Activated CD4-positive, alpha-beta memory T cell treated with anti-CD3 and anti-CD28 coated beads for 36 hours (primary cell): ENCODE measurements at regions of chr13 and their contacts with region 1.

Region 1: DNA sequence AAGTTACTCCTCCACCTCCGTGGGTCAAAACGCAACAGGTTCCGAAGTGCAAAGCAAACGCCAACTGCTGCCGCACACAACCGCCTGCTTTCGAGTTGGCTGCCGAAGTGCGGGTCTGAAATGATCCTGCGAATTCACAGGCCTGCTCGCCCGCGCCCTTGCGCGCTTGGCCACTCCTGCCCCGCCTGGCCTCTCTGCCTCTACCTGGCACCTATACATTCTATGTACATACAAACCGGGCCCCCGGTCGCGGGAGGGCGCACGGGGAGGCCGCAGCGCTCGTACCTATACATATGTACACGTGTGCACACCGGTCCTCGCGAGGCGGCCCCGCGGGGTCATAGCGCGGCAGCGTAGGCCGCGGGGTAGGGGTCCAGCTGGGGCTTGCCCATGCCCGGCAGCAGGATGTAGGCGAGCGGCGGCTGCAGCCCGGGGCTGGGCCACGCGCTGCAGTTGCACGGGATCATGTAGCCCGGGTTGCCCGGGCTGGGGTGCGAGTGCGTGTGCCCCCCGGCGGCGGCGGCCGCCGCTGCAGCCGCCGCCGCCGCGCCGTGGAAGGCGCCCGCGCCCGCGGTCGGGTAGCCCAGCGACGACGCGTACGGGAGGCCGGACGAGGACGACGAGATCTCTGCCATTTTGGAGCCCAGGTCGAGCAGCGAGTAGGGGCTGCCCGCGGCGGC is 1.3 kb downstream of the SOX21 start:
- DNase-seq: peak; percentile 34
- H3K4me3 Mint-ChIP-seq: peak overlapping the region; percentile 36
- H3K27ac Mint-ChIP-seq: no peak overlapping the region
- H3K4me1 Mint-ChIP-seq: peaks cover 21% of the 10 kb centered on the region
- H3K27me3 Mint-ChIP-seq: peaks cover 72% of the 10 kb centered on the region

Region 2: GRCh38 chr13:94674609-94675348 is 36.2 kb before region 1 on chr13:
- CTCF ChIA-PET with region 1: interaction called, 3 read pairs
- POLR2A ChIA-PET with region 1: no interaction called
- intact Hi-C with region 1: loop called (anchors 5 kb)
- DNase-seq: peak; percentile 60
- H3K4me3 Mint-ChIP-seq: no peak overlapping the region
- H3K27ac Mint-ChIP-seq: no peak overlapping the region
- H3K4me1 Mint-ChIP-seq: no peaks in the 10 kb centered on the region
- H3K27me3 Mint-ChIP-seq: peaks cover 29% of the 10 kb centered on the region

Region 3: DNA sequence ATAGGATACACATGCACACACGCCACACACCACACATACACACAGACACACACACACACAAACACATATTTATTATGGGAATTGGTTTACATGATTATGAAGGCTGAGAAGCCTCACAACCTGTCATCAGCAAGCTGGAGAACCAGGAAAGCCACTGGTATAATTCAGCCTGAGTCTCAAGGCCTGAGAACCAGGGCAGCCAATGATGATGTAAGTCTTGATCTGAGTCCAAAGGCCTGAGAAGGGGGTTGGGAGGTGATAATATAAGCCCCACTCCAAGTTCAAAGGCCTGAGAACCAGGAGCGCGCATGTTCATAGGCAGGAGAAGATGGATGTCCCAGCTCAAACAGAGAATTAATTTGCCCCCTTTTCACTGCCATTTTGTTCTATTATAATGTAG is 20.0 kb after region 1 on chr13:
- CTCF ChIA-PET with region 1: no interaction called
- POLR2A ChIA-PET with region 1: no interaction called
- intact Hi-C with region 1: no loop called
- DNase-seq: no peak
- H3K4me3 Mint-ChIP-seq: no peak overlapping the region
- H3K27ac Mint-ChIP-seq: no peak overlapping the region
- H3K4me1 Mint-ChIP-seq: no peaks in the 10 kb centered on the region
- H3K27me3 Mint-ChIP-seq: peaks cover 9% of the 10 kb centered on the region

Region 4: DNA sequence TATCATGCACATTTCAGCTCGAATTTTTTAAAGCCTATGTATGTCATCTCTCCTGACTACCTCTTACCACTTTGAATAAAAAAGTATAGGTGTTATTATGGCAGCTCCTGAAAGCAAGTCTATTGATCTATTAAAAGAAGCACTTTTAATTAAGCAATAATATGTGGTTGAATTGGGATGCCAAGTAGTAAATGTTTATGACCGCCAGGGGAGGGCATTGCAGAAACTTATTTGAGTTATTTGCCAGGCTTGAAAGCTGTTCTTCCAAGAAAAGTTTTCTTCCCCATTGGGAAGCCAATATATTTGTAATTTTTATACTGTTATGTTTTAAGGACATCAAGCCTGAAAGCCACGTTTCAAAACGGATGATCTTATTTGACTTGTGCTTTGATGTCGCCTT is 89.4 kb after region 1 on chr13:
- CTCF ChIA-PET with region 1: no interaction called
- POLR2A ChIA-PET with region 1: no interaction called
- intact Hi-C with region 1: no loop called
- DNase-seq: no peak
- H3K4me3 Mint-ChIP-seq: no peak overlapping the region
- H3K27ac Mint-ChIP-seq: no peak overlapping the region
- H3K4me1 Mint-ChIP-seq: no peaks in the 10 kb centered on the region
- H3K27me3 Mint-ChIP-seq: peaks cover 2% of the 10 kb centered on the region

Region 5: DNA sequence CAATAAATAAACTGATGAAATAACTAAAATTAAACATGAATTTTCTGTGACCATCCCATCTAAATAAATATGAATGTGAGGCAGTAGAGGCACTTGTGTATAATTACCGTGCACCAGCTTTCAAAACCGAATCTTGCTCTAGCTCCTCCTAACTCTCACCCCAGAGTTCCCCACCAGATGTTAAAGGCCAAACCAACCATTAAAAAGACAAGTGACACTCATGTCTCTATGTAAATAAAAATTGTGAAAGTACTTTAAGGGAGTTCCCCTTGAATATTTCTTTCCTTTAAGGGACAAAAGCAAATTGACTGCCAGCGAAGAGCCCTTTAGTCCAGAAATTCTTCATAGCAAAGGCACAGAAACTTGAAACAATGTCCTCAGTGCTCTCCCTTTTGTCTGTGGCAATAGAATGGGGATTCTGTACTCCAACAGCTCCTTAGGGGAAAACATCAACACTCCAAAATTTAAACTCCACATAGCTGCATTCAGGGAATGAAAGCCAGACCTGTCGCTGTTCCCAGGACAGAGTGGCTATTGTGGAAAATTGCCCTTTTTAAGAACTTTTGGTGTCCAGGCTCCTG is 103.0 kb after region 1 on chr13:
- CTCF ChIA-PET with region 1: no interaction called
- POLR2A ChIA-PET with region 1: no interaction called
- intact Hi-C with region 1: no loop called
- DNase-seq: no peak
- H3K4me3 Mint-ChIP-seq: no peak overlapping the region
- H3K27ac Mint-ChIP-seq: no peak overlapping the region
- H3K4me1 Mint-ChIP-seq: no peaks in the 10 kb centered on the region
- H3K27me3 Mint-ChIP-seq: peaks cover 3% of the 10 kb centered on the region

Region 6: DNA sequence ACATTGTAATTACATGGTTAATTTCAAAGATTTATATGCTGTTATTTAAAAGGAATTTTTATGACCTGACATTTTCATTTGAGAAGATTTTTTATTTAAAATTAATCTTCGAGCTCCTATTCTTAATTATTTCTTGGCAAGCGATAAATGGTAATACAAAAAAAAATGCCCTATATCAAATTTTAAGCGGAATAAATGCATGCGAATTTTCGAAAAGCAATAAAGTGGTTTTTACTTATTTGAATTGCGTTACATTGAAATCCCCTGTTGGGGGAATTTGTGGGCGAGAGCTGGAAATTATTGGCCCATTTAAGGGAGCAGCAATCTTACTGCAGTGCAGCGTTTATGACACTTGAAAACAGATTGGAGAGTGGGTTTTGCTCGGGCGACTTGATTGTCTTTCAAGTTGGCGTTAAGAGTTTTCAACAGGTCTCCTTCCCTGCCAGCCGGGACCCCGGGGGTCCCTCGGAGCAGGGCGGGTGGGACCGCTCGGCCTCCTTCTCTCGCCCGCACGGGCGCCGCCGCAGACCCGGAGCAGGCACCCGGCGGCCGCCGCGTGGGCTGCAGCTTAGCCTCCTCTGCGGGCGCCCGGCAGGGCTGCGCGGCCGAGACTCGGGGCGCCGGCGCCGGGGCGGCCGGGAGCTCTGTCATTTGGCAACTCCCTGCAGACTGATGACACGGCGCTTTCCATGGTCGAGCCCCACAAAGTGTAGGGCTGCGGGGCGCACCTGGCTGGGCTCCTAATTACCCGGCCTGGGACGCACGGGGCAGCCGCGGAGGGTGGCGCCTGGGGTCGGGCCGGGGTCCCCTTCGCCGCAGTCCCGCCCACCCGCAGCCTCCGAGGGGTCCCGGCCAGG is 256.4 kb after region 1 on chr13:
- CTCF ChIA-PET with region 1: interaction called, 3 read pairs
- POLR2A ChIA-PET with region 1: no interaction called
- intact Hi-C with region 1: loop called (anchors 5 kb)
- DNase-seq: peak; percentile 45
- H3K4me3 Mint-ChIP-seq: no peak overlapping the region
- H3K27ac Mint-ChIP-seq: no peak overlapping the region
- H3K4me1 Mint-ChIP-seq: peaks cover 8% of the 10 kb centered on the region
- H3K27me3 Mint-ChIP-seq: peaks cover 56% of the 10 kb centered on the region

Region 7: GRCh38 chr13:95156208-95156607 is 445.2 kb after region 1 on chr13:
- CTCF ChIA-PET with region 1: no interaction called
- POLR2A ChIA-PET with region 1: no interaction called
- intact Hi-C with region 1: loop called (anchors 10 kb)
- DNase-seq: no peak
- H3K4me3 Mint-ChIP-seq: no peak overlapping the region
- H3K27ac Mint-ChIP-seq: no peak overlapping the region
- H3K4me1 Mint-ChIP-seq: peaks cover 4% of the 10 kb centered on the region
- H3K27me3 Mint-ChIP-seq: no peaks in the 10 kb centered on the region